Mammary epithelial cell (primary cell): ENCODE measurements at regions of chr2 and their contacts with region 1.

Region 1: DNA sequence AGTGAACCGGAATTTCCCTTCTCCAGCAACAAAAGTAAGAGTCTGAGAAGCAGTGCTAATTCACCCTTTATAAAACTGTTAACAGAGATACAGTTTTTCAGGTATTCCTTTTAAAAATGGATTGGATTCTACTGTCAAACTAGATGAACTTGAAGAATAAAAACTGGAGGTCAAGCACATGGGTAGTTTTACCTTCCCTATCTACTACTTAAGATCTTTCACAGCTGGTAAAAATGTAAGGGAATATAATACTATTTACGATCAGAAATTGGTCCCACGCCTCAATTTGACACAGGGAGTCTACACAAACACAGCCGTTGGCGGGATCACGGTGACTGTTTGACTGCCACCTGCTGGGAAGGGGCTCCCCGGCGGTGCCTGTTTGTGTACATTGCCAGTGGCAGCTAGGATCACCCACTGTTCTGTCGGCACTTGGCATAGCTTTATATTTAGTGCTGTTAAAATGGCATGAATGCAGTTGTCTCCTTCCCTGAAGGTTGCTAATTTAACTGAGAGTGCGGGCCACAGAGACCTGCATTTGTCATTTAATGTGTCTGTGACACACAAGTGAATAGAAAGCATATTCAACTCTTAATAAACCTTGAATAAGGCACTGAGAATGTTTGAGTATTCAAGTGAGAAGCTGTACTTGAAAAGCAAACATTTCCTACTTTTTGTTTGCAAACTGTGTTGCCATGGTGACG is 59.5 kb downstream of the ABCG8 start:
- DNase-seq: no peak
- H3K4me3 ChIP-seq: no peak overlapping the region
- H3K27ac ChIP-seq: no peak overlapping the region
- H3K4me1 ChIP-seq: no peaks in the 10 kb centered on the region
- H3K27me3 ChIP-seq: no peaks in the 10 kb centered on the region
- CTCF ChIP-seq: no peak

Region 2: GRCh38 chr2:43977677-43978375 is 79.5 kb after region 1 on chr2:
- CTCF ChIA-PET with region 1: no interaction called
- dilution Hi-C with region 1: no loop called
- in situ Hi-C with region 1: no loop called
- intact Hi-C with region 1: loop called (anchors 5 kb)
- DNase-seq: no peak
- H3K4me3 ChIP-seq: no peak overlapping the region
- H3K27ac ChIP-seq: no peak overlapping the region
- H3K4me1 ChIP-seq: no peaks in the 10 kb centered on the region
- H3K27me3 ChIP-seq: no peaks in the 10 kb centered on the region
- CTCF ChIP-seq: no peak